ENCODE measurements at regions of chr4 and their contacts with region 1.

Region 1: DNA sequence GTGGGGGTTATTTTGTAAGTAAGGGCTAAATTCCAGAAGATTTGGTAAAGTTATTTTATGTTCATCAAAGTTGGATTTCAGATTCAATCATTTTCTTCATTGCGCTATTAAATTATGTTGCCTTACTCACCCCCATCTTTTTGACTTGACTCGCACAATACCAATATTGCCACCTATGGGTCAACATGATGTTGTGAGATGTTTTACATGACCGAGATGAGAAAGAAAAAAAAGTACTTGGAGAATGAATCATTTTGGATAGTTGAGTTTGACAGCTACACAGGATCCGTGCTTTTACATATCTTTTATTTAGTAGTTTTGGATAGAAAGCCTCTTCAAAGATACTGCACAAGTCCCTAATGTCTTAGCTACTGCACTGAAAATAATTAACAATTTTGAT is 224.2 kb upstream of the EMCN start:
- DNase-seq: peak; percentile 70
- H3K4me3 ChIP-seq: no peak overlapping the region
- H3K27ac ChIP-seq: no peak overlapping the region
- H3K4me1 ChIP-seq: peaks cover 19% of the 10 kb centered on the region
- H3K27me3 ChIP-seq: no peaks in the 10 kb centered on the region
- CTCF ChIP-seq: peak; percentile 41 to 72

Region 2: GRCh38 chr4:100093091-100093866 is 648.8 kb before region 1 on chr4:
- CTCF ChIA-PET with region 1: no interaction called
- dilution Hi-C with region 1: no loop called
- in situ Hi-C with region 1: no loop called
- intact Hi-C with region 1: loop called (anchors 2 kb)
- DNase-seq: peak; percentile 88
- H3K4me3 ChIP-seq: no peak overlapping the region
- H3K27ac ChIP-seq: peak overlapping the region; percentile 64
- H3K4me1 ChIP-seq: peaks cover 4% of the 10 kb centered on the region
- H3K27me3 ChIP-seq: no peaks in the 10 kb centered on the region
- CTCF ChIP-seq: peak; percentile 72 to 85

Region 3: DNA sequence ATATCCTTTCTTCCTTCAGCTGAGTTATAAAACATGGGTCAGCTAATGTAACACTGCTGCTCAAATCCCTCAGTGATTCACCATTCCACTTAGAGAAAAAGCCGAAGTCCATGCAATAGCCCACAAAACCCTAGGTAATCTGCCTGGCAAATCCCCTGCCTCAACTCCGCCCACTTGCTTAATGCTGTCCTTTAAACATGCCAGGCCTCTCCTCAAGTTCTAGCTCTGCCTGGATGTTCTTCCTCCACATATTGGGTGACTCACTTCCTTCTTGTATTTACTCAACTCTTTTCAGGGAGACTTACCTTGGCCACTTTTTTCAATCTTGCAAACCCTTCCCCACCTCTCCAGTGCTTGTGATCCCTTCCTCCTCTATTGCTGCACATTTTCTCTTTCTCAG is 314.0 kb before region 1 on chr4:
- CTCF ChIA-PET with region 1: no interaction called
- dilution Hi-C with region 1: no loop called
- in situ Hi-C with region 1: loop called in 1 of 2 experiments (anchors 25 kb)
- intact Hi-C with region 1: no loop called
- DNase-seq: peak; percentile 93
- H3K4me3 ChIP-seq: no peak overlapping the region
- H3K27ac ChIP-seq: no peak overlapping the region
- H3K4me1 ChIP-seq: peaks cover 14% of the 10 kb centered on the region
- H3K27me3 ChIP-seq: no peaks in the 10 kb centered on the region
- CTCF ChIP-seq: no peak

Region 4: DNA sequence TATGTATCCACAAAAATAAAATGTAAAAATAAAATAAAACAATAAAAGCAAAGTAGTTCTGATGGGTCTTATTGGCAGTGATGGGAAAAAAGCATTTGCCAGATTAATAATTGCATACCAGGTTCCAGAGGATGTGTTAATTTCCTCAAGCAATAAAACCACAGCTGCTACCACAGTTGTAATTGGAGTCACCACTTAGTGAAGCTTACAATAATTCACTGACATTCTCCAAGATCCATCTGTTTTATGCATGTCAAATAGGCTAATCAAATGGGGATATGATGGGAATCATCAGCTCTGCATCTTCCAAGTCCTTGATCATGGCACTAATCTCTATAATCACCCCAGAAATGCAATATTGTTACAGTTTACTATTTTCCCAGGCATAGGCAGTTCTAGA is 100.7 kb before region 1 on chr4:
- CTCF ChIA-PET with region 1: no interaction called
- dilution Hi-C with region 1: no loop called
- in situ Hi-C with region 1: no loop called
- intact Hi-C with region 1: no loop called
- DNase-seq: no peak
- H3K4me3 ChIP-seq: no peak overlapping the region
- H3K27ac ChIP-seq: no peak overlapping the region
- H3K4me1 ChIP-seq: no peaks in the 10 kb centered on the region
- H3K27me3 ChIP-seq: peaks cover 5% of the 10 kb centered on the region
- CTCF ChIP-seq: no peak